Ascending aorta (tissue), 2 donors: ENCODE measurements at regions of chr20 and their contacts with region 1.

Region 1: DNA sequence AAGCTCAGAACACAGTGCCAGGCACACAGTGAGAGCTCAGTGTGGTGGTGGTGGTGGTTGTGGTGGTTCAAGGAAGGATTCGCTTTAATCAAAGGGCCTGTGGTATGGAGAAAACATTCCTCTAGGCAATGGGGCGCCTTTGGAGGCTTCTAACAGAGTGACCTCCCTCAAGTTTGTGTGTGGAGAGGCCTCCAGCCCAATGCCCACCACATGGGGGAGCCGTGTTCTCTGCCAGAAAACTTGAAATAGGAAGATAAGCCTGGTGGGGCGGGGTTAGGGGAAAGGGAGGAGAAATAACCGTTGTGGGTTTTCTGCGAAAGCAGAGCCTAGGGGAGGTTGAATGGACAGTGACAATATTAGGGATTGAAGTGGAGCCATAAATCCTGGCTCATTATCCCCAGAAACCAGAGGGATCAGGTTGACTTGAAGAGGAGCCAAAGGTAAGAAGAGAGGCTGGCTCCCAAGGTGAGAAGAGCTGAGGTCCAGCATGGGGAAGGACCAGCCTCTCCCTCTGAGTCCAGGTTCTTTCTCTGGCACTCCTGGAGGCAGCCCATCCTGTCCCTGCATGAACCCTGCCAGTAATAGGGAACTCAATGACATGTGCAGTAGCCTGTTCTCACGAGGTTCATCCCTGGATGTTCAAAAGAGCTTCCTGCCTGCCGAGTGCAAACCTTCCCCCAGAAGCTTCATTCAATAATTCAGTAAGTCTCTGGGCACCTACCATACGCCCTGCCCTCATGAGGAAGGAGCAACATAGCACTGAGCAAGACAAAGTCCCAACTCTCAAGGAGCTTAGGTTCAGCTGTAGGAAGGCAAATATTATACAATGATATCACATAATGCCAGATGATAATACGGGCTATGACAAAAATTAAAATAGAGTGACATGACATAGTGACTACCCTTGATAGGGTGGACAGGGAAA is 51.4 kb downstream of the TGM2 start:
- DNase-seq: no peak
- H3K4me3 ChIP-seq: no peak overlapping the region
- H3K27ac ChIP-seq: no peak overlapping the region
- H3K4me1 ChIP-seq: peaks cover 11 to 38% of the 10 kb centered on the region in 2 donors
- H3K27me3 ChIP-seq: no peaks in the 10 kb centered on the region
- CTCF ChIP-seq: no peak

Region 2: DNA sequence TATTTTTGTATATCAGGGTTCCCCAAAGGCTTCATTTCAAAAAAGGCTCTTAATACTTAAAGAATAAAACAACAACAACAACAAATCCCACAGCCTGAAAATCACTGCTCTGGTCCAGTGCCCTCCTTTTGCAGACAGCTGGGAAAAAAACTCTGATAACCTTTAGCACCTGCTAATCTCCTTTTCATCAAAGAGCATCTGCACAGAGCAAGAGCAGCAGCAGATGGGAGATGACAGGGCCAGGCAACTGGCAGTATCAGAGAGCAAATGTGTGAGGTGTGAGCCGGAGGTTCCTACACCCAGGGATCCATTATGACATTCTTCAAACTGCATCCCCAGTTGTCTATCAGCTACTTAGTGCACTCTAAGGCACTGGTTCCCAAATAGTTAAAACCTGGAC is 106.1 kb before region 1 on chr20:
- intact Hi-C with region 1: no loop called
- DNase-seq: no peak
- H3K4me3 ChIP-seq: no peak overlapping the region
- H3K27ac ChIP-seq: no peak overlapping the region
- H3K4me1 ChIP-seq: no peaks in the 10 kb centered on the region
- H3K27me3 ChIP-seq: no peaks in the 10 kb centered on the region
- CTCF ChIP-seq: no peak

Region 3: DNA sequence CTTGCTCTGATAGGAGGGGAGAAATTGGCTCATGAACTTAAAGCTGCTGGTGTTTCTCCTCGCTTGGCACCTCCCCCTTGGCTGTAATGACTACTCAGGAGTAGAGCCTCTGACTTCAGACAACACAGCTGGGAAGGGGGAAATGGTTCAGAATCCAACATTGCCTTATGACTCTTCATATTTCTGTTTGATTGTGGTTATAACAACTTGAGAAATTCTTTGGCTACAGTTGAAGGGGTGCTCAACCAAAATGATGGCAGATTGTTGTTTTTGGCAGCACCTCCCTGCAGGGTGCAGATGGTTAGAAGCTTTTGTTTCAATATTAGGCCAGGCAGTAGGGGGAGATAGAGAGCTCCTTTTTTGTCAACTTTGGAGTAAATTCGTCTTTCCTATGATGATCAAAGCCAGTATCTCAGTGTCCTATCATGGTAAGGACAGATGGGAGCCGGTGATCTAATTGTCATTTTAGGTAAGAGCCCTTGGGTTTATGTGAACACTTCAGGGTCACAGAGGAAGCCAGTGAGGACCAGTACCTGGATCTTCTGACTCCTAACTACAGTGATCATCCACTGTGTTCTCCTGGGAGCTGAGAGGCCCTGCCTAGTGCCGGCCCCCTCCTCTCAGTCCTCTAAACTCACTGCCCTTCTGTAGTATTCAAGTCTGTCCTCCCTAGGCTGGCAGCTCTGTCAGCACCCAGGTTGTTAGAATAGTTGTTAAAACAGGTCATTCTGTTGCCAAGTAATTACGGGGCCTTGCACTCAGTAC is 40.2 kb before region 1 on chr20:
- intact Hi-C with region 1: loop called (anchors 5 kb)
- DNase-seq: peak in 1 of 2 donors; percentile 86
- H3K4me3 ChIP-seq: no peak overlapping the region
- H3K27ac ChIP-seq: peak overlapping the region; percentile 86
- H3K4me1 ChIP-seq: peaks cover 18 to 34% of the 10 kb centered on the region in 2 donors
- H3K27me3 ChIP-seq: no peaks in the 10 kb centered on the region
- CTCF ChIP-seq: peak; percentile 64 to 88 (median 80)

Region 4: DNA sequence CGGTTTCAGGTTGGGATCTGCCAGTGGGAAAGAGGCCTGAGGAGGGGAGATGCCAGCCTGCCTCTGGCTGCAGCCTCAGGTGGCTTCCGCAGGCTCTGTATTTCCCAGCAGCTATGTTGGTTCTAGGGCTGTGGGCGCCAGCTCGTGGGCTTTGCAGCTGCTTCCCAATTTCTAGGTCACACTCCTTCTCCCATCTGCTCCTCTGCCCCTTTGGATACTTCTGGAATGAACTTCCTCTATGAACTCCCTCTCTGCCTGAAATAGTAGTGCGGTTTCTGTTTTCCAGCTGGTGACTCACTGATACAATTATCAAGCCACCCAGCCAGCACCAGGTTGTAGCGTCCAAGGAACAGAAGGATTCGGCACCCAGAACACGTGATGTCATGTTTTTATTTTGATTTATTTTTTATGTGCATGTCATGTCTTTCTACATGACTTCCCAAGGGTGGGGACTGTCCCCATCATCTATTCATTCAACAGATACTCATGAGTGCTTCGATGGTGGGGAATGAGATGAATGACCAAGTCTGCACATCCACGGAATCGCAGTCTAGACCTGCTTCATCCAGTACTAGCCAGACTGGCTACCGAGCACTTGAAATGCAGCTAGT is 13.5 kb after region 1 on chr20:
- intact Hi-C with region 1: loop called (anchors 1 kb)
- DNase-seq: peak in 1 of 2 donors; percentile 81
- H3K4me3 ChIP-seq: no peak overlapping the region
- H3K27ac ChIP-seq: peak overlapping the region; percentile 85 to 87
- H3K4me1 ChIP-seq: peaks cover 15 to 30% of the 10 kb centered on the region in 2 donors
- H3K27me3 ChIP-seq: no peaks in the 10 kb centered on the region
- CTCF ChIP-seq: no peak

Region 5: DNA sequence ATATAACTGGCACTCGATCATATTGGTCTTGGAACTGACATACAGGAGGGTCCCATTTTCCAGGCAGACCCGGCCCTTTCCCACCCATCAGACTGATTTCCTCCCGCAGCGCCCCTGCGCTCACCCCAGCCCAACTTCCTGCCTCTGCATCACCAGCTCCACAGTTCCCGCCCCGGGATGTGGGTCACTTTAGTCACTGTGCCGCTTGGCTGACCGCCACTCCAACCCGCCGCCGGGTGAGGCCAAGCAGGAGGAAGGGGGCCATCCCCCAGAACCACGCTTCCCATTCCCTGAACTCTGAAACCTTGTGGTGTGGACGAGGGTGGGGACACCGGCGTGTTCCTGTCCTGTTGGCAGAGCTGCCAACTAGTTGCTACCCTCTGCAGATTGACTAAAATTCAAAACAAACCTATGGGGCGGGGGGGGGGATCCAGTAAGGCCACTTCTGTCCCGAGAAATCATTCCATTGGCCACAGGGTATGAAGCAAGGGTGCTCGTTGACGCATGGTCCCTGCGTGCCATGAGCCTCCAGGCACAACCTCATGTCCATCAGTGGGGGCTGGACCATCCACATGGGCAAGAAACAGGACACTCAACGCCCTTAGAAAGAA is 39.1 kb after region 1 on chr20:
- intact Hi-C with region 1: loop called (anchors 2 kb)
- DNase-seq: peak; percentile 85 to 97
- H3K4me3 ChIP-seq: peak overlapping the region; percentile 16 to 19
- H3K27ac ChIP-seq: peak overlapping the region; percentile 88 to 89
- H3K4me1 ChIP-seq: peaks cover 13 to 34% of the 10 kb centered on the region in 2 donors
- H3K27me3 ChIP-seq: no peaks in the 10 kb centered on the region
- CTCF ChIP-seq: no peak

Region 6: DNA sequence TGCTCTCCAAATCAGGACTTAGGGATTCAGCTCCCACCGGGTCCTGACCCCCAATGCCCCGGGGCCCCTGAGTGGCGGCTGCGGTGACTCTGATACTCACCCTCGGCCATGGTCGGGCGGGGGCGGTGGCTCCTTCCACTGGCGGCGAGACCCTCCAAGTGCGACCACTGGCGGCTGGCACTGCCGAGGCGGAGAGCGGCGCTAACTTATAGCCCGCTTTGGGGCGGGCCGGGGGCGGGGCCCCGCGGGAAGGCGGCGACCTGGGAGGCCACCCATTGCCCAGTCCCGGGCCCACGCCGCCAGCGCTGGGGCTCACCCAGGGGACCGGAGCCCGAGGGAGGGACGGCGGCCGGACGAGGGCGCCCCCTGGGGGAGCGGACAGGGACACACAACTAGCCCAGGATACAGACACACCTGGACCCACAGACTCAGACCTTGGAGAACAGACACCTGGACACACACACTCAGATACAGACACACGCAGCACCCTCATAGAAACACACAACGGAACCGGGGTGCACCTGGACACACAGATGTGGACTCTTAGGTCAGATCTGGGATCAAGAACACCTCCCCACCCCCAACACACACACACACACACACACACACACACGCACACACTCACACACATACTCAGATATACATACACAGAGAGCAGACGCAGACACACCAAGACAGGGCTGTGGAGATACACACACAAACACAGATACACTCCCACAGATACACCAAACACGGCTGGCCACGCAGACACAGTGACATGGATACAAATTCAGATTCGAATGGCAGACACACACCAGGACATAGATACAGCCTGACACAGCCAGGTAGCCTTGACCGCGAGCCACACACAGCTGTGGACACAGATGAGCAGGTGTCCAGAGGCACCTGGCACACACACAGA is 51.7 kb after region 1 on chr20 and contains the start of gene TGM2:
- intact Hi-C with region 1: loop called (anchors 2 kb)
- DNase-seq: peak; percentile 42 to 91
- H3K4me3 ChIP-seq: peak within 1 kb of the TSS; percentile 62 to 75
- H3K27ac ChIP-seq: peak within 1 kb of the TSS; percentile 86 to 88
- H3K4me1 ChIP-seq: peaks cover 19 to 35% of the 10 kb centered on the region in 2 donors
- H3K27me3 ChIP-seq: no peaks in the 10 kb centered on the region
- CTCF ChIP-seq: peak; percentile 87 to 95 (median 92)
- total RNA-seq, gene TGM2: 529 TPM